Activated T-helper 1 cell treated with anti-CD3 and anti-CD28 coated beads, Interleukin-12 subunit alpha, Interleukin-12 subunit beta, Interleukin-2, Interleukin-4 antibody, amounts not matched to agents 30 ng/mL and 10 ng/mL and 1 ng/mL, durations not matched to agents 14 hours and 24 hours and 36 hours (primary cell): ENCODE measurements at regions of chr10 and their contacts with region 1.

Region 1: GRCh38 chr10:71314028-71314693 is 4.9 kb upstream of the SLC29A3 start:
- DNase-seq: peak; percentile 23
- H3K4me3 Mint-ChIP-seq: no peak overlapping the region
- H3K27ac Mint-ChIP-seq: no peak overlapping the region
- H3K4me1 Mint-ChIP-seq: peaks cover 23% of the 10 kb centered on the region
- H3K27me3 Mint-ChIP-seq: peaks cover 7% of the 10 kb centered on the region

Region 2: GRCh38 chr10:71372882-71373495 is 58.8 kb after region 1 on chr10:
- intact Hi-C with region 1: loop called (anchors 1 kb)
- DNase-seq: no peak
- H3K4me3 Mint-ChIP-seq: no peak overlapping the region
- H3K27ac Mint-ChIP-seq: no peak overlapping the region
- H3K4me1 Mint-ChIP-seq: peaks cover 14% of the 10 kb centered on the region
- H3K27me3 Mint-ChIP-seq: peaks cover 7% of the 10 kb centered on the region

Region 3: DNA sequence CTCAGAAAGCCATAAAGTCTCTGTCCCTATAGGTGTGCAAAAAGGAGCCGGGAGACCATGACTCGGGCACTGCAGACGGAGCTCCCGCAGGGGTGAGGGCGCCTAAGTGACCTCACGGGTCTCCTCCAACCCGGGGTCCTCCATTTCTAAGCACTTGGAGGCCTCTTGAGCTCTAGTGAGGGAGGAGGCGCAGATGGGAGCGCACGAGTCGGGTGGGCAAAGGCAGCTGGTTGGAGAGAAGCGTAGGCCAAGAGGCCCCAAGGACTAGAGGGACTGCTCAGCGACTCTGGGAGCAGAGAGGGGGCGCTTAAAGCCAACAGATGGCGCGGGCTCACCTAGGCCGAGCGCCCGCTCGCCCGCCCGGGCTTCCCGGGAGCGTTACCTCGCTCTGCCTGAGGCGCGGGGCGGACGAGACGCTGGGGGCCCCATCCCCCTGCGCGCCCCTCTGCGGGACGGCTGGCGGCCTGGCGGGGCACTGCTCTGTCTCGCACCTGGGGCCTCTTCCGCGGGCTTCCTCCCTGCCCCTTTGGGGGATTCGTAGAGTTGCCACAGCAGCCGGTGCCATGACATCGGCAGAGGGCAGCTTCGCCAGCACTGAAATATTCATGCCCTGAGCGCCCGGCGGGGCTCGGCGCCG is 82.0 kb after region 1 on chr10:
- intact Hi-C with region 1: no loop called
- DNase-seq: no peak
- H3K4me3 Mint-ChIP-seq: peak overlapping the region; percentile 62
- H3K27ac Mint-ChIP-seq: no peak overlapping the region
- H3K4me1 Mint-ChIP-seq: no peaks in the 10 kb centered on the region
- H3K27me3 Mint-ChIP-seq: peaks cover 53% of the 10 kb centered on the region

Region 4: GRCh38 chr10:71608819-71609768 is 294.9 kb after region 1 on chr10:
- intact Hi-C with region 1: loop called (anchors 1 kb)
- DNase-seq: peak; percentile 35
- H3K4me3 Mint-ChIP-seq: no peak overlapping the region
- H3K27ac Mint-ChIP-seq: no peak overlapping the region
- H3K4me1 Mint-ChIP-seq: peaks cover 5% of the 10 kb centered on the region
- H3K27me3 Mint-ChIP-seq: peaks cover 4% of the 10 kb centered on the region

Region 5: GRCh38 chr10:71708301-71708703 is 394.1 kb after region 1 on chr10:
- intact Hi-C with region 1: loop called (anchors 1 kb)
- DNase-seq: peak; percentile 43
- H3K4me3 Mint-ChIP-seq: no peak overlapping the region
- H3K27ac Mint-ChIP-seq: no peak overlapping the region
- H3K4me1 Mint-ChIP-seq: peaks cover 27% of the 10 kb centered on the region
- H3K27me3 Mint-ChIP-seq: no peaks in the 10 kb centered on the region

Region 6: GRCh38 chr10:71893920-71894319 is 579.8 kb after region 1 on chr10:
- intact Hi-C with region 1: loop called (anchors 1 kb)
- DNase-seq: no peak
- H3K4me3 Mint-ChIP-seq: no peak overlapping the region
- H3K27ac Mint-ChIP-seq: no peak overlapping the region
- H3K4me1 Mint-ChIP-seq: peaks cover 10% of the 10 kb centered on the region
- H3K27me3 Mint-ChIP-seq: peaks cover 7% of the 10 kb centered on the region